Cardiac septum (tissue), 1 donor: ENCODE measurements at regions of chr1 and their contacts with region 1.

Region 1: DNA sequence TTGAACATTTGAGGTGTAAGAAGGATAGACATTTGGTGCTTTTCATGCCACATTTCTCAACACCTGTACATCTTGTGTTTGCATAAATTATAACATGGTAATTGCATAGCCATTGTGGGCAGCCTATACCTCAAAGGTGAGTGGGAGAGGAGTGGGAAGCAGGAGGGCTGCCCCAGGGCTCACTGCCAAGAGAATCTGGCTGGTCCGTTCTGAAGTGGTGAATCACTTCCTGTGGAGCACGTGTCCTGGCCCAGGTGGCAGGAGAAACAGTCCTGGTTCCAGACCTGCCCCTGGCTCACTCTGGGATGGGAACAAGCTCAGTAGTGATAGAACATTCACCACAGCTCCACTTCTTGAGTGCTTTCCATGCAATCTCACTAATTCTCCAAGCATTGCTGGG is 11.6 kb upstream of the OLFML2B start:
- DNase-seq: no peak

Region 2: DNA sequence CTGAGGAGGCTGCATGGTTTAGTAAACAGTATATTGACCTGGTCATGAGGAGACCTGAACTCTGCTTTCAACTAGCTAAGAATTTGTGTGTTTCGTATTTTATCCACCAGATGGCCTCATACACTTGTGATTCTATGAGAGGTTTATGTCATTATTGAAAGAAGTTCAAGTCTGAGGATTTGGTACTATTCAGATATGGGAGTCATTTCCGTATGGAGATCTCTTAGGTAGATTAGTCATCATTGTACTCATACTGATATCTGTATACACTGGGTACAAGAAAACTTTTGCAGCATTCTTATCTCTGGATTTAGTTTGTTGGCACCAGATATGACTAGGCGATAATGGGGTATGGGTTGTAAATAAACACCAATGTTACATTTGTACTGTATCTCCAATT is 242.5 kb before region 1 on chr1:
- intact Hi-C with region 1: loop called (anchors 2 kb)
- DNase-seq: no peak

Region 3: DNA sequence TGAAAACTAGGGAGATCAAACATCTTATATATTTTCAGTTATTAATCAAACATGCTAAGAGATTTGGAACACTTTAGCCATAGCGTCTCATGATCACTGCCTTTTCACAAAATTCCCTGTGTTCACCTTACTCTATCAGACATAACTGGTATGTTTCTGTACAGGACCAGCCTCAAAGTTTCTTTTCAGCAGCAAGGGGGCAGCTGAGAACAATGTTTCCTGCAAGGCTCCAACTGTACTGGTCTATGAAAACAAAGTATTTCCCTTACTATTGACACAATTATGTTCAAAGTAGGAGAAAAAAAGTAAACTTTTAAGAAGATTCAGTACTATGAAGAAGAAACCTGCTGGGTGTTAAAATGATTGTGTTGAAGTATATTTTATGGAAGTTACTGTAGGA is 170.7 kb before region 1 on chr1:
- intact Hi-C with region 1: loop called (anchors 5 kb)
- DNase-seq: no peak

Region 4: DNA sequence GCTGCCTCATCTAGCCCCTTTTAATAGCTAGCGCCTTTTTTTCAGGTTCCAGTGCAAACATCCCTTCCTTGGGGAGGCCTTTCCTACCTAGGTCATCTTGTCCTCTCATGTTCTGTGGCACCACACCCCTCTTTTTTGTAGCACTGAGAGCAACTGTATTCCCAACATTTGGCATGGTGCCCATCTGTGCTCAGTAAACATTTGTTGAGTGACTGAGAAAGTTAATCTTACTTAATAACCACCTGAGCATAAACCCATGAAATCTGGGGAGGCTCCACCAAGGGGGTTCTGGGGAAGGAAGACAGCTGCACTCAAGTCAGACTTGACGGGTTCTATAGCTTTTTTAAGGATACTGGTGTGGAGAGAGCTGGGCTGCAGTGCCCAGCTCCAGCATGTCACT is 124.3 kb after region 1 on chr1:
- intact Hi-C with region 1: no loop called
- DNase-seq: no peak

Region 5: GRCh38 chr1:162177126-162177525 is 141.9 kb after region 1 on chr1:
- intact Hi-C with region 1: no loop called
- DNase-seq: no peak